ENCODE measurements at regions of chr9 and their contacts with region 1.

Region 1: GRCh38 chr9:98998441-98999151 is 54.9 kb downstream of the COL15A1 start:
- DNase-seq: peak in 8 of 9 experiments; percentile 17 to 67 (median 60)
- ATAC-seq: peak; percentile 59
- H3K4me3 ChIP-seq: no peak overlapping the region
- H3K4me3 Mint-ChIP-seq: no peak overlapping the region
- H3K27ac ChIP-seq: no peak overlapping the region
- H3K27ac Mint-ChIP-seq: no peak overlapping the region
- H3K4me1 ChIP-seq: peaks cover 19% of the 10 kb centered on the region
- H3K4me1 Mint-ChIP-seq: peaks cover 17% of the 10 kb centered on the region
- H3K27me3 ChIP-seq: no peaks in the 10 kb centered on the region
- H3K27me3 Mint-ChIP-seq: no peaks in the 10 kb centered on the region
- CTCF ChIP-seq: peak; percentile 62

Region 2: GRCh38 chr9:98807070-98807810 is 191.4 kb before region 1 on chr9 and contains the start of gene GALNT12:
- CTCF ChIA-PET with region 1: interaction called, 7 read pairs
- POLR2A ChIA-PET with region 1: no interaction called
- intact Hi-C with region 1: loop called in 1 of 2 experiments (anchors 2 kb)
- DNase-seq: peak; percentile 22 to 81 (median 62)
- ATAC-seq: peak; percentile 90
- H3K4me3 ChIP-seq: peak within 1 kb of the TSS; percentile 66 to 68
- H3K4me3 Mint-ChIP-seq: peak within 1 kb of the TSS; percentile 87
- H3K27ac ChIP-seq: no peak within 1 kb of the TSS
- H3K27ac Mint-ChIP-seq: peak within 1 kb of the TSS; percentile 57
- H3K4me1 ChIP-seq: peaks cover 10% of the 10 kb centered on the region
- H3K4me1 Mint-ChIP-seq: peaks cover 27% of the 10 kb centered on the region
- H3K27me3 ChIP-seq: no peaks in the 10 kb centered on the region
- H3K27me3 Mint-ChIP-seq: peaks cover 3% of the 10 kb centered on the region
- CTCF ChIP-seq: no peak
- total RNA-seq, gene GALNT12: 7.9 to 9.0 TPM

Region 3: DNA sequence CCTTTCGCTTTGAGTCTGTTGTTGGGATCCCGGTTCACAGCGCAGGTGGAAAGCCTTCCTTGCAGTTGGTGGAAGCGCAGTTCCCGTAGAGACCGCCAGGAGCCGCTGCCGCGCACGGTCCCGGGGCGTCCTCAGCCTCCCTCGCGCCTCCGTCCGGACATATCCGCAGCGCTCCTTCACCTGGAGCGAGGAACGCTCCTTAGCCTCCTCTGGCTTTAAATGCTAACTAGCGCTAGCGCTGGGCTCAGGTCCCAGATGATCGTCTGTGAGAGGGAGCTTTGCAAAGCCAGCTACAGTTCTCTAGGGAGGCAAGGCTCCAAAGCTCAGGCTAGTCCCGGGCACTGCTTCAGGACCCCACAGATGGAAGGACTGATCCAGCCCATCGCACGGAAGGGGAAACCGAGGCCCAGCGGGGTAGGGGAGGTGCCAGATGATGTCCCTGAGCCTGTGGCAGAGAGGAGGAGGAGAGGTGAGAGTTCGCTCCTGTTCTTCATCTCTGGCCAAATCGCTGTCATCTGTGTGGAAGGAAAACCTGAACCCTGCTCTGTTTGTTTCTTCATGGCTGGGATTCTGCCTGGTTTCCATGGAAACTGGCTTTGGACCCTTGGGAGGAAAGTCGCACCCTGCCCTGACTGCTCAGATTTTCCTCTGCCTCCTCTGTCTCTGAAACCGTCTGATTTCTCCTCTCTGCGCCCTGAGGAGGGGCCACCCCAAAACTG is 23.4 kb before region 1 on chr9:
- CTCF ChIA-PET with region 1: interaction called, 7 read pairs
- POLR2A ChIA-PET with region 1: no interaction called
- intact Hi-C with region 1: loop called in 1 of 2 experiments (anchors 1 kb)
- DNase-seq: peak; percentile 66 to 88 (median 81)
- ATAC-seq: peak; percentile 99
- H3K4me3 ChIP-seq: peak overlapping the region; percentile 33
- H3K4me3 Mint-ChIP-seq: peak overlapping the region; percentile 67
- H3K27ac ChIP-seq: no peak overlapping the region
- H3K27ac Mint-ChIP-seq: no peak overlapping the region
- H3K4me1 ChIP-seq: peaks cover 18% of the 10 kb centered on the region
- H3K4me1 Mint-ChIP-seq: peaks cover 6% of the 10 kb centered on the region
- H3K27me3 ChIP-seq: peaks cover 0 to 7% of the 10 kb centered on the region in 2 experiments
- H3K27me3 Mint-ChIP-seq: peaks cover 7% of the 10 kb centered on the region
- CTCF ChIP-seq: peak; percentile 97

Region 4: GRCh38 chr9:99057665-99058625 is 59.3 kb after region 1 on chr9:
- CTCF ChIA-PET with region 1: interaction called, 12 read pairs
- POLR2A ChIA-PET with region 1: interaction called, 4 read pairs
- intact Hi-C with region 1: loop called in 1 of 2 experiments (anchors 1 kb)
- DNase-seq: peak; percentile 41 to 91 (median 79)
- ATAC-seq: peak; percentile 67
- H3K4me3 ChIP-seq: peak overlapping the region; percentile 49
- H3K4me3 Mint-ChIP-seq: peak overlapping the region; percentile 85
- H3K27ac ChIP-seq: peak overlapping the region in 1 of 2 experiments; percentile 78
- H3K27ac Mint-ChIP-seq: peak overlapping the region; percentile 85
- H3K4me1 ChIP-seq: peaks cover 65% of the 10 kb centered on the region
- H3K4me1 Mint-ChIP-seq: peaks cover 85% of the 10 kb centered on the region
- H3K27me3 ChIP-seq: no peaks in the 10 kb centered on the region
- H3K27me3 Mint-ChIP-seq: no peaks in the 10 kb centered on the region
- CTCF ChIP-seq: no peak

Region 5: GRCh38 chr9:99112750-99113413 is 114.3 kb after region 1 on chr9:
- CTCF ChIA-PET with region 1: interaction called, 15 read pairs
- POLR2A ChIA-PET with region 1: interaction called, 3 read pairs
- intact Hi-C with region 1: no loop called
- DNase-seq: peak in 5 of 9 experiments; percentile 45 to 87 (median 69)
- ATAC-seq: peak; percentile 92
- H3K4me3 ChIP-seq: peak overlapping the region in 1 of 2 experiments; percentile 10
- H3K4me3 Mint-ChIP-seq: peak overlapping the region; percentile 66
- H3K27ac ChIP-seq: peak overlapping the region; percentile 6 to 41
- H3K27ac Mint-ChIP-seq: peak overlapping the region; percentile 88
- H3K4me1 ChIP-seq: peaks cover 85% of the 10 kb centered on the region
- H3K4me1 Mint-ChIP-seq: peaks cover 93% of the 10 kb centered on the region
- H3K27me3 ChIP-seq: no peaks in the 10 kb centered on the region
- H3K27me3 Mint-ChIP-seq: no peaks in the 10 kb centered on the region
- CTCF ChIP-seq: no peak

Region 6: DNA sequence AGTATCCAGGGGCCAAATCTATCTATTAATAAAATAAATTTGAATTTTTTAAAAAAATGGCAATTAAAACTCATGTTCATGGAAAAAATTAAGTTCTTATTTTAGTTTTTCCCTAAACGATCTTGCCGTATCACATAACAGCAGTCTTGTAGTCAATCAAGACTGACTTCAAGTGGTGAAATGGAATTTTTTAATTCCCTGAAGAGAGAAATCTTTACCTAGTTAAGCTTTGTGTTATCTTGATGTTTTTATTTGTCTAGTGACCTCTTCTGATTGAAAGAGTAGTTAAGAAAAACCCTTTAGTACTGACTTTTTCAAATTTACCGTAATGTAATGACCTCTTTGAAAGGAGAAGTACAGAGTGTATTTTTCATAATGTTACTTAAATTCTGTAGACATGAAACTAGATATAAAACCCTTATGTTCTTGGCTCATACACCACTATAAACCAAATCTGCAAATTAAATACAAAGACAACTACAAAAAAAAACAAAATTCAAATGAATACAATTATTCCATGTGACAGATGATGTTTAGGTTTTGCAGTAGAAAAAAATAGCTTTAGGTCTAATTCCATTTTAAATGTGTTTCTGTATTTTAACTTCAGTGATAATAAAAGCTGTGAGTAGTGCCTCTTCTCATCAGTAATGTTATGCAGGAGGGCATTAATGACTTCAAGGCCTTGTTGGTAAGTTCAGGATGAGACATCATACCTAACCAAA is 126.1 kb after region 1 on chr9:
- CTCF ChIA-PET with region 1: interaction called, 12 read pairs
- POLR2A ChIA-PET with region 1: no interaction called
- intact Hi-C with region 1: no loop called
- DNase-seq: no peak
- ATAC-seq: no peak
- H3K4me3 ChIP-seq: no peak overlapping the region
- H3K4me3 Mint-ChIP-seq: no peak overlapping the region
- H3K27ac ChIP-seq: no peak overlapping the region
- H3K27ac Mint-ChIP-seq: peak overlapping the region; percentile 42
- H3K4me1 ChIP-seq: peaks cover 87% of the 10 kb centered on the region
- H3K4me1 Mint-ChIP-seq: peaks cover 93% of the 10 kb centered on the region
- H3K27me3 ChIP-seq: no peaks in the 10 kb centered on the region
- H3K27me3 Mint-ChIP-seq: no peaks in the 10 kb centered on the region
- CTCF ChIP-seq: no peak

Region 7: DNA sequence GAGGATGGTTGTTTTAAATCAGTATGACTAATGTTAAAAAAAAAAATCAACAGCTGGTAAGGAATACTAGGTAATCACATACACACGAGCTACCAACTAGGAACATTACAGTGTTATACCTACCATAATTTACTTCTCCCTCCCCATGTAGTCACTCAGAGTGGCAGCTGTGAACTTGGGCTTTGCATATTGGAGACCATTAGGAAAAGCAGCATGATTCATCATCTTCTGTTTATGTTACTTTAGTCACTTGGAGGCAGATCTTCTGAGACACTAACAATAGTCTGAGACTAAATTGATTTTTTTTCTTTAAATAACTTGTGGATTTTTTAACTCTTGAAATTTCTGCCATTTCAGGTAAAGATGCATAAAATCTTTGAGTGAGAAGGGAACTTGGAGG is 681.6 kb after region 1 on chr9:
- CTCF ChIA-PET with region 1: no interaction called
- POLR2A ChIA-PET with region 1: no interaction called
- intact Hi-C with region 1: no loop called
- DNase-seq: no peak
- ATAC-seq: no peak
- H3K4me3 ChIP-seq: no peak overlapping the region
- H3K4me3 Mint-ChIP-seq: no peak overlapping the region
- H3K27ac ChIP-seq: no peak overlapping the region
- H3K27ac Mint-ChIP-seq: no peak overlapping the region
- H3K4me1 ChIP-seq: no peaks in the 10 kb centered on the region
- H3K4me1 Mint-ChIP-seq: no peaks in the 10 kb centered on the region
- H3K27me3 ChIP-seq: no peaks in the 10 kb centered on the region
- H3K27me3 Mint-ChIP-seq: peaks cover 3% of the 10 kb centered on the region
- CTCF ChIP-seq: no peak